ENCODE measurements at regions of chr13 and their contacts with region 1.

Region 1: GRCh38 chr13:59677966-59678814 is 485.5 kb downstream of the DIAPH3 start:
- DNase-seq: peak; percentile 19
- H3K4me3 ChIP-seq: no peak overlapping the region
- CTCF ChIP-seq: peak; percentile 76

Region 2: DNA sequence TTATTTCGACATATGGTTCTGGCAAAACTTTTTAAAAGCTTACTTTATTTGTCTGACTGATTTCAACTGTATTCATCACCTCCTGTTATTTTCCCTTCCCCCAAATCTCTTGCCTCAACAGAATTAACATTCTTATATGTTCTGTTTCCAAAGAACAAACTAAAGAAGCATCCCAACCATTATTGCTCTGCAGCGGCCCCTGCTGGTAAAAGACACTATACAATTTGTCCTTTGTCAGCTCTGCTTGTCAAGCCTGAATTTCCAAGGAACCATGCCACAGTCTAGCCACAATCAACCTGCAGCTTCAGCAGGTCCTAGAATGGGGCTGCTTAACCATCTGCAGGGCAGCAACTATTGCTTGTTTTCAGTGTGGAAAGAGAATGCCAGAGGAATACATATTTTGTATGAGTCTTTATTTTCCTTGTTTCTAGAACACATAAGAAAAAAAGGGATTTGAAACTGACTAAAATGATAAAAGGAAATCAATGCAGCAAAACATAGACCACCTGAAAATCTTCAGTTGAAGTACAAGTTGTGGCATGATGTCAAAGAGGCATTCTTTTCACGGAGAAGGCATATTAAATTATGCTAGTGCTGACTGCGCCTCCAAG is 359.8 kb before region 1 on chr13:
- CTCF ChIA-PET with region 1: interaction called, 13 read pairs
- POLR2A ChIA-PET with region 1: no interaction called
- DNase-seq: no peak
- H3K4me3 ChIP-seq: no peak overlapping the region
- CTCF ChIP-seq: peak; percentile 56

Region 3: DNA sequence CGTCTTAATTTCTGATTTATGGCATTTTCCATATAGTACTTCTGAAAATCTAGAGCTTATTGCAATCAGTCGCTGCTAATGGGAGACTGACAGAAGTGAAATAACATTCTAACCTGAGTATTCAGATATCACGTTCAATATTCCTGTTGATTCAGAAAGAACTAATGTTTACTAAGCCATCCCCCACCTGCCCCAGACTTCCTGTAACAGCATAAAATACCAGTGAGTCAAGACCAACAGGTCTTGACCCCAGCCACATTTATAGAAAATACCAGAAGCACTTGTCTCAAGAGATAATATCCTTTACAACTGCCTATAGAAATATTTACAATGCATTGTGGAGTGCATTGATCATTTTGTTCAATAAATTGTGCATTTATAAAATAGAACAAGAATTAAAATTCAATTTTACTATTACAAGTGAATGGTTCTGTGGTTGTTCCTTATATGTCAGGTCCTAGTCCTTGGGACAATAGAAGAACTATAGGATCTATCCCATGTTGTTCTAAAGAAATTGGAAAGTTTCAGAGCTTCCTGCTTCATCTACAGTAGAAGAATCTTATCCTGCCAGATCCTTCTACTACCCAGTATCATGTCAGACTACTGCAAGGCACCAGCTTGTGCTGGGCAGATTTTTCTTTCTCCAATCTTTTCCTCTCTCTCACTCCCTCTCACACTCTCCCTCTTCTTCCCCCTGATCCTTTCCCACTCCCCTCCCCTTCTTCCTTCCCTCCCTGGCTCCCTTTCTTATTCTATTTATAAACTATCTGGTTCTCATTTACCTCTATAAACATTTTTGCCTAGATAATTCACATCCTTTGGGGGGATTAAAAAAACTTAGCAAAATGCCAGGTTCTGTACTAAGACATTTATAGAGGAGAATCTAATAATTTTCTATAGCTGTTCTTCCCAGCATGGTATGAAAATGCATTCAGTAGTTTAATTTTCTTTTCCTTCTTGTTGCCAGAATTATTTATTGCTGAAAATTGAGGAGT is 144.3 kb before region 1 on chr13:
- CTCF ChIA-PET with region 1: no interaction called
- POLR2A ChIA-PET with region 1: no interaction called
- DNase-seq: no peak
- H3K4me3 ChIP-seq: no peak overlapping the region
- CTCF ChIP-seq: no peak

Region 4: DNA sequence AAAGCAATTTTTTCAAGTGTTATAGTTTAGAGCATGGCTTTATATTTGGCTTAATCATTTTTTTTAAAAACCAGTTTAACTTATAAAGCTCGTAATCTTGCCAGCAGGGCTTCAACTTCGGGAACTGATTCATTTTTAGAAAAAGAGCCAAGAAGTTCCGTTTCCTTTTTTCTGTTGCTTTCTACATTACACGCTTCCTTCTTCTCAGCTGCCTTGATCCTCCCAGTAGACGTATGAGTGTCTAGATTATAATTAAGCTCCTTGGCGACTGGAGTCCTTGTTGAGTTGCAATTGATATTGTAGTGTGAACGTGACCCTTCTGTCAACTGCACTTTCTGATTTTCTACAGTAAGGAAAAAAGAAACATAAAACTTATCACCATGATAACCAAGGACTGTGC is 11.7 kb before region 1 on chr13:
- CTCF ChIA-PET with region 1: interaction called, 52 read pairs
- POLR2A ChIA-PET with region 1: no interaction called
- DNase-seq: no peak
- H3K4me3 ChIP-seq: no peak overlapping the region
- CTCF ChIP-seq: no peak

Region 5: DNA sequence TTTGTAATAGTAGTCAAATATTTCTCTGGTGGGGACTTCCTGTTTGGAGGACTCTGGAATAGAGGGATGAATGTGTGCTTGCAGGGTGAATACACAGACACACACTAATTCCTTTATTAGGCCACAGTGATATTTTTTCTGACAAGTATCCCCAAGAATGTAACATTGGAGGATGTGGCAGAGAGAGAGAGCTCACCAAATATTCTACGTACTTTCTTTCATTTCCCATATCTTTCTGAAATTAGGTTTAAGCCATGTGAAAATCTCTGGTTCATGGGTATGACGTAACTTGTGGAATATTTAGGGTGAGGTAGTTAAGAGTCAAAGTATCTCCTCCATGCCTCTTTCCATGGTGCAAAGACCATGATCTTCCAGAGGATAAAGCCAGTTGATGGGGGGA is 22.1 kb after region 1 on chr13:
- CTCF ChIA-PET with region 1: interaction called, 15 read pairs
- POLR2A ChIA-PET with region 1: no interaction called
- DNase-seq: peak; percentile 37
- H3K4me3 ChIP-seq: no peak overlapping the region
- CTCF ChIP-seq: no peak

Region 6: GRCh38 chr13:59906413-59907049 is 228.3 kb after region 1 on chr13:
- CTCF ChIA-PET with region 1: interaction called, 25 read pairs
- POLR2A ChIA-PET with region 1: no interaction called
- DNase-seq: no peak
- H3K4me3 ChIP-seq: no peak overlapping the region
- CTCF ChIP-seq: peak; percentile 53

Region 7: DNA sequence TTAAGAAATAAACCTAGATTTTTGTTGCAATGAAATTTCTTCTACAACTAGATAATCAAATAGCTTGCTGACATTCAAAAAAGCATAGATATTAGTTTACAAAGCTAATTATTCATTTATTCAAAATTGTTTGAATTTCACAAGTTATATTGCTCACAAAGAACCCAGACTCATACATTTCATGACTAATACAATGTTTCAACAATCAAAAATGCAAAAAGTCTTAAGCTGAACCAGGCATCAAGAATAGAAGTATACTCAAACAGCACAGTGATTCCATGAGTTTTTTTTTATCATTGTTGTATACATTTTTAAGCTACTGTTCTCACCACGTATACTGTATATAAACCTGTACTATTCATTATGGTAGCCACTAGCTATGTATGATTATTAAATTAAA is 434.6 kb after region 1 on chr13:
- CTCF ChIA-PET with region 1: no interaction called
- POLR2A ChIA-PET with region 1: no interaction called
- DNase-seq: peak; percentile 4
- H3K4me3 ChIP-seq: no peak overlapping the region
- CTCF ChIP-seq: no peak